Left cardiac atrium (tissue), 4 donors: ENCODE measurements at regions of chr18 and their contacts with region 1.

Region 1: DNA sequence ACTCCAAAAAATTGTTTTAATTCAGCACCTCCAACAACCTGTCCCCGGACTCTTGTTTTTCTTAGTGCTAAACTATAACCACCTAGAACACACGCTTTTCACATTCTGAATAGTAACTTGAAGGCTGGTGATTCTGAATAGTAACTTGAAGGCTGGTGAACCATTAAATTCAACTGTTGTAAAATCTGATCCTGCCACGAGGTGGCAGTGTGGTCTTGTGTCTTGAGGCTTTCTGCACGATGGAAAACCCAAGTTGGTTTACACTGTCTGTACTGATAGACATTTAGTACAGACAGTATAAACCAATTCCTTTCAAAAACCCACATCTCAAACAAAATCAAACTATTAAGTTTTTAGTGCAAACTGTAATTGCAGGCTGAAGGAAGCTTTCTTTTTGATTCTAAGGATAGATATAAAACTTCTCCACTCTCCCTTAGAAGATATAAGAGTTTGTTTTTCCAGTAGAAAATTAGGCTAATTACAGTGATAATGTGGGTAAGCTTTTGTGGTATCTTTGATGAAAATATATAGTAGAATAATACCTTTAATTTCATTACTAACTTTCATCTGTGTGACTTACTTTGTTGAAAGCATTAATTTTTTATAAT is 57.6 kb downstream of the VAPA start:
- DNase-seq: peak; percentile 66
- ATAC-seq: peak; percentile 57 to 70

Region 2: DNA sequence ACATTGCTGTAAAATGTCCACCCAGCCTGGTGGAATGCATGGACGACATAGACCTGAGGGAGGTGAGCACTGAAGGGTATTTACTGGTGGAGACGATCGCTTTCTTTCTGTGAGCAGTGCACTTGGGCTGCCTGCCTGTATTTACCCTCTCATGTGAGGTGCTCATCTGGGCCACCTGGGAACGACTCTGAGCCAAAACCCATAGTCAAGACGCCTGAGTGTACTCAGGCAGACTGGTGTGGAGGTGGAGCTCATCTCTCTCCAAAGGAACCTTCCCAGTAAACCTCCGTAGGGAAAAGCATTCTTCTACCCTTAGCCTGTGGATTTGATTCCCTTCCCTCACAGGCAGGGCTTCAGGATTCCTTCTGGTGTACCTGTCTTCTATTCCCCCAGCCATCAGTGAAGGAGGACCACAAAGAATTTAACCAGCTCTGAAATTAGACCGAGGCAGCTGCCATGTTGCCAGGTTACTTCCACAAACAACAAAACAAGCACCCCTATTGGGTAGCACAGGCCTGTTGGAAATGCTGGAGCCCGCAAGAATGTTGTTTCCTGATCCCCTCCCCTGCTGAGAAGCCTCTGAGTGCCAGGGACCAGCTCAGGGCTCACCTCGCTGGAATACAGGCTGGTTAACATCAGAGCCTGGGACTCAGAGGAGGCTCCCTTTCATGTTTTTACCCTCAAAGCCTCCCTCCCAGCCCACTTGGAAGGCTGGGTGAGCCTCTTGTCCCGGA is 133.1 kb before region 1 on chr18:
- intact Hi-C with region 1: no loop called
- DNase-seq: no peak
- ATAC-seq: peak; percentile 52 to 86

Region 3: DNA sequence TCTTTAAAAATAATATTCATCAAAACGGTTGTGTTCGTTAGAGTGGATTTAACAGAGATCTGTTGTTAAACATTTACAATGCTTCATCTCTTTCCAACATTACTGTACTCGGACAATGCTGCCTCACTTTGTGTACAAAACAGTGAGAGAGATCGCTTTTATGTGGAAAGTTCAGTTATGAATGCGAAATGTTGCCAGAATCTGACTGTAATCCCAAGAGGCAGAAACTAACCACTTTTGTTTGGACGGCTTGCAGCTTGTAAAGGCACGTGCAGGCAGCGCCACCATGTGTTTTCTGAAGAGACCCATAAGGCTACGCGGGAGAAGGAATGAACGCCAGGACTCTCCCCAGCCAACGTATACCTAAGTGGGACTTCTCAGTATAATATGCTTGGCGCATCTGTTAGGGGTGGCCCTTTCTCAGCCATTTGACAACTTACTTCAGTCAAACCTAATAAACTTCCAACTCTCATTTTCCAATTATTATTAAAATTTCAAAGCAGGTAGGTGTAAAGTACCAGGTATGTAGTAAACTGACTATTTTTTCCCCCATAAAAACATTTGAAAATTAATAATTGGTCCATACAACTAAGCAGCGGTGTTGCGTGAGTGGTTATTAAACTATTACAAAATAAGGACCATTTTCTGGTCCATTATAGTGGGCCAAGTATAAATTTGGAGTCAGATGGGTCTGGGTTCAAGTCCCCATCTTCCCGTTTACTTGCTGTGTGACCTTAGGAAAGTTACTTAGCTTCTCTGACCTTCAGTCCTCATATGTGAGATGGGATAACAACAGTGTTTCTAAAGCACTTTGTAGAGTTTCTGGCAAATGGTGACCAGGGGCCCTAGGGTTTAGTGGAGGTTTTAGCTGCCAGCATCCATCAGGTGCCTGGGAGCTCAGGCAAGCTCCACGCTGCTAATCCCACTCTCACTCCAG is 548.9 kb after region 1 on chr18:
- intact Hi-C with region 1: loop called (anchors 2 kb)
- DNase-seq: peak; percentile 88
- ATAC-seq: peak; percentile 85 to 88